Vagina (tissue), 2 donors: ENCODE measurements at regions of chr14 and their contacts with region 1.

Region 1: DNA sequence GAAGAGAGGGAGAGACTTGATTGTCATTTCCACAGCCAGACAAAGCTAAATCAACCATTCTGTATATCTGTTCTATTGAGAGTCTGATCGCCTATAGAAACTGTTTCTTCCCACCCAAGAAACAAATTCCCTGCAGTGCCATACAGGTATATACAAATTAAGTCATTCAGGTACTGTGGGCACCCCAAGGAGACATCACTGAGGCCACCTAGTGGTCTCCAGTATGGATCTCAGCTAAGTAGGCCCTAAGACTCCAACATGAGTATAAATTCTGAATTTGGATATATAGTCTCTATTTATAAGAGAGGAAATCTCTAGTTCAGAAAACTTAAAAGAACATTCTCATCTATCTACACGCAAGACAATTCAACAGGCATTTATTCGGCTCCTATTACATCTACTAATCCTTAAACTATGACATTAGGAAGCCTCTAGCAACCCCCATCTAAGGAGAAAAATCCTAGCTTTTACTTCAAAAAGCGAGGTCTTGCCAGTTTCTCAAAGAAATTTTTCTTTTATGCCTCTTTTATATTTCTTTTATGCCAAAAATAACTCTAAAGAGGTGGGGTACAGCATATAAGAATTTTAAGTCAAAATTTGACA is 62.6 kb downstream of the DCAF5 start:
- DNase-seq: no peak
- H3K4me3 ChIP-seq: no peak overlapping the region
- H3K27ac ChIP-seq: no peak overlapping the region
- H3K4me1 ChIP-seq: peaks cover 46% of the 10 kb centered on the region
- H3K27me3 ChIP-seq: no peaks in the 10 kb centered on the region
- CTCF ChIP-seq: peak in 2 of 3 experiments; percentile 41 to 45
- POLR2A ChIP-seq: no peak

Region 2: DNA sequence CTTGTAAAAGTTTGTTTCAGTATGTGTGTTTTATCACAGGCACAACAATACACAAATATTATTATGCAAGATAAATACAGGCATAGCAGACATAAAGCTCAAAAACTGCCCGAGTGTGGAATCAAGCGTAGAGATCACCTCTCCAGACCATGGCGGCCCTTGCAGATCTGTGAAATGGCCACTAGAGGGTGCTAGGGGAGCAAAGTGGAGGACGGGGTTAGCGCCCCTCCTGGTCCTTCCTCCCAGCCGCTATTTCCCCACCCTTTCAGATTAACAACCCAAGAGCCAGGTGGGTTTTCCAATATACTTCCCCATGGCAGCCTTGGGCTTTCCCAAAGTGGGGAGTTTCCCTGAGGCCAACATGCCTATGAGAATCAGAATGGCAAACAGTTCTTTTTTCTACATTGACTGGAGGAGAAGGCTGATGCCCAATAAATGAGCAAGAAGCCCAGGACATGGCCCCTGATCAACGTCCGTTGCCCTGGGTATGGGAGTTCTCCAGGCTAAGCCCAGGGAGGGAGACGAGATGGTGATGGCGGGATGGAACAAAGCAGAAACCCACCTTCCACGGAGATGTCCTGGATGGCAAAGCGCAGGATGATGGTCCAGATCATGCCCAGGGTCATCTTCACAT is 178.6 kb before region 1 on chr14:
- intact Hi-C with region 1: loop called (anchors 10 kb)
- DNase-seq: no peak
- H3K4me3 ChIP-seq: no peak overlapping the region
- H3K27ac ChIP-seq: peak overlapping the region; percentile 13
- H3K4me1 ChIP-seq: no peaks in the 10 kb centered on the region
- H3K27me3 ChIP-seq: no peaks in the 10 kb centered on the region
- CTCF ChIP-seq: peak; percentile 88 to 97 (median 91)
- POLR2A ChIP-seq: no peak